ENCODE measurements at regions of chr2 and their contacts with region 1.

Region 1: DNA sequence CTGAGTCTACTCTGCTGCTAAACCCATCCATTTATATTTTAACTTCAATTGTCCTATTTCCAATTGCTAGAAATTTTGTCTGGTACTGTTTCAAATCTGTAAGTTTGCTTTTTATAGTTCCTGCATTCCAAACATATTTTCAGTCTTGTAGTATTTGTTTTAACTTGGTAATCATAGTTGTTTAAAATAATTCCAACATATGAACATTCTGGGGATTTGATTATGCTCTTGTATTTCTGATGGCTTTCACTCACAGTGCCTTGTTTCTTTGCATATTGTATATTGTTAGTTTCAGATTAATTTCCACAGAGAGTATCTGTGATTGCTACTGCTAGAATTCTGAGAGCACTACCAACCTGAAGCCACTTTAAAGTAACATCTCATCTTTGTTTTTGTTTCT is 202.4 kb downstream of the ETAA1 start:
- DNase-seq: peak; percentile 31
- ATAC-seq: peak; percentile 62
- H3K4me3 ChIP-seq: no peak overlapping the region
- H3K27ac ChIP-seq: no peak overlapping the region; the same call in 1 of the 2 replicates
- H3K4me1 ChIP-seq: peaks cover 37% of the 10 kb centered on the region
- H3K27me3 ChIP-seq: no peaks in the 10 kb centered on the region
- CTCF ChIP-seq: no peak

Region 2: DNA sequence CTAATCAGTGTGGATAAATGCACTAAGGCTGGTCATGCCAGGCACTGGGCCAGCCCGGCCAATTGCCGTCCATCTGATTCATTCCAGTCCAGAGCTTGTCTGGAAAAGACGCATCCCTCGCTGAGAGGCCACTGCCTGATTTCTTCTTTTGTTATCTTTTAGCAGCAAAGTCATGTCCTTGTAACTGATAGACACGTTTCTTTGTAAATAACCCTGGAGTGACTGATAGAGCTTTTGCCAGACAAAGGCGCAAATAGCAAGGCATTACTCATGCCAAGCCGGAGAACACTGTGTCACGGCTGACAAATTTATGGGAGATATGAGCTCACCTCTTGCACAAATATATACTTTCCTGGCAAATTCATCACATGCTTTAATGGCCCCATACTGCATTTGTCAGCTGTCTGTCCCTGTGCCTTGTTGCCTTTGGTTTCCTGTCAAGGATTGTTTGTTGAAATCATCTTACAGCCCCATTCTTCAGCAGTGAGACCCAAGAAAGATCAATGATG is 38.0 kb before region 1 on chr2:
- CTCF ChIA-PET with region 1: no interaction called
- POLR2A ChIA-PET with region 1: no interaction called
- intact Hi-C with region 1: loop called (anchors 5 kb)
- DNase-seq: peak; percentile 95
- ATAC-seq: peak; percentile 79
- H3K4me3 ChIP-seq: no peak overlapping the region
- H3K27ac ChIP-seq: peak overlapping the region; percentile 63
- H3K4me1 ChIP-seq: peaks cover 51% of the 10 kb centered on the region
- H3K27me3 ChIP-seq: no peaks in the 10 kb centered on the region
- CTCF ChIP-seq: no peak

Region 3: GRCh38 chr2:67571785-67572718 is 27.5 kb before region 1 on chr2:
- CTCF ChIA-PET with region 1: no interaction called
- POLR2A ChIA-PET with region 1: no interaction called
- intact Hi-C with region 1: loop called (anchors 2 kb)
- DNase-seq: peak; percentile 94
- ATAC-seq: peak; percentile 53
- H3K4me3 ChIP-seq: no peak overlapping the region
- H3K27ac ChIP-seq: peak overlapping the region; percentile 86
- H3K4me1 ChIP-seq: peaks cover 46% of the 10 kb centered on the region
- H3K27me3 ChIP-seq: no peaks in the 10 kb centered on the region
- CTCF ChIP-seq: no peak

Measured in PC-3 (cell line).